ENCODE measurements at regions of chr22 and their contacts with region 1.

Region 1: DNA sequence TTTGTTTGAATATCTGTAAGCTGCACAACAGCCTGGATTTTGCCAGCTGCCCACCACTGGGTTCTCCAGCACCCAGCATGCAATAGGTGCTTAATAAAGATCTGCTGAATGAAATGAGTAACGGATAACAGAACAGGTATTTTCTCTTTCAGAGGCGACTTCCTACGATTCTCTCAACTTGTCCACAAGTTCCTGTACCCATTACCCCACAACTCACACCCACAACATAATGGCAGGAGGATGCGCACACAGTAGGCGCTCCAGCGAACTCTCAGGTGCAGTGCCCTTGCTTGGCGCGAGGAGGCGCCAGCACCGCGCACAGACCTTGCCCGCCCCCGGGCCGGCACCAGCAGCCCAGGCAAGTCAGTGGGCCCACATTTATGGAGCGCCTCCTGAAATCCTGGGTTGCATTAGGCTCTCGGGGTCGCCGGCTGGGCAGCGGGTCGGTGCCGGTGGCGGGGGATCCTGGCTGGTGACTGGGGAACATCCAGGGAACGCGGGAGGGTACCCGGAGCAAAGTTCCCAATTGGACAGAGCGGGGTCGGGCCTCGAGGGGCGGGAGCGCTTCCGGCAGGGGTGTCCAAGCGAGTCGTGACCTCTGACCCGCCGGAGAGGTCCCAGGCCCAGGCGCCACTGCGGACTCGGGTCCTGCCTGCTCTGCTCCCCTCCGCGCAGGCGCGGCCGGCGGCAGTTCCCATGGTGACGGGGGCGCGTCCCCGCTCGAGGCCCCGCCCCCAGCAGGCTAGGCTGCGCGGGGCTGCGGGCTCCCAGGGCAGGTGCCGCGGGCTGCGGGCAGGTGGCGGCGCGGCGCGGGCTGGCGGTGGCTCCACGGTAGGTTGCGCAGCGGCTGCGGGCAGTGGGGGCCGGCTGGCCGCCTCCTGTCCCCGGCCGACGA is at the start of gene KIAA1671:
- DNase-seq: peak; percentile 86
- ATAC-seq: peak; percentile 81
- H3K4me3 ChIP-seq: peak within 1 kb of the TSS; percentile 70 to 85 (median 85)
- H3K27ac ChIP-seq: peak within 1 kb of the TSS; percentile 90
- H3K4me1 ChIP-seq: peaks cover 41% of the 10 kb centered on the region
- H3K27me3 ChIP-seq: no peaks in the 10 kb centered on the region
- CTCF ChIP-seq: peak; percentile 99
- EP300 ChIP-seq: no peak
- POLR2A ChIP-seq: peak in 1 of 2 experiments; percentile 65; a peak in 2 of 4 replicates
- RAD21 ChIP-seq: peak; percentile 97
- total RNA-seq, gene KIAA1671: 12.0 and 13.5 TPM in 2 replicates

Region 2: DNA sequence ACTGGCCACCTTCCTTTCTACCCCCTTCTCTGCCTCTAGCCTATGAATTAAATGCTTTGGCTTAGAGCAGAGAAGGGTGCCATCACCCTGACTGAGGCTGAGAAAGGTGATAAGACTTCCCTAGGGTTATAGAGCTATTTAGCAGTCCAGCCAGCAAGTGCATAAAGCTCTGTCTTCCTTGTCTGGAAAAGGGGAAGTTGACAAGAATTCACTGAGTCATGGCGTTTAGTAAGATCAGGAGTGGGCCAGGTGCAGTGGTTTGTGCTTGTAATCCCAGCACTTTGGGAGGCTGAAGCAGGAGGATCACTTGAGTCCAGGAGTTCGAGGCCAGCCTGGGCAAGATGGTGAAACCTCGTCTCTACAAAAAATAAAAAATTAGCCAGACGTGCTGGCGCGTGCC is 68.8 kb before region 1 on chr22:
- CTCF ChIA-PET with region 1: no interaction called
- POLR2A ChIA-PET with region 1: no interaction called
- in situ Hi-C with region 1: no loop called
- intact Hi-C with region 1: no loop called
- DNase-seq: no peak
- ATAC-seq: no peak
- H3K4me3 ChIP-seq: no peak overlapping the region
- H3K27ac ChIP-seq: no peak overlapping the region
- H3K4me1 ChIP-seq: no peaks in the 10 kb centered on the region
- H3K27me3 ChIP-seq: peaks cover 0 to 5% of the 10 kb centered on the region in 2 experiments; a peak in 1 of 5 replicates
- CTCF ChIP-seq: no peak
- EP300 ChIP-seq: no peak
- POLR2A ChIP-seq: no peak
- RAD21 ChIP-seq: no peak

Region 3: DNA sequence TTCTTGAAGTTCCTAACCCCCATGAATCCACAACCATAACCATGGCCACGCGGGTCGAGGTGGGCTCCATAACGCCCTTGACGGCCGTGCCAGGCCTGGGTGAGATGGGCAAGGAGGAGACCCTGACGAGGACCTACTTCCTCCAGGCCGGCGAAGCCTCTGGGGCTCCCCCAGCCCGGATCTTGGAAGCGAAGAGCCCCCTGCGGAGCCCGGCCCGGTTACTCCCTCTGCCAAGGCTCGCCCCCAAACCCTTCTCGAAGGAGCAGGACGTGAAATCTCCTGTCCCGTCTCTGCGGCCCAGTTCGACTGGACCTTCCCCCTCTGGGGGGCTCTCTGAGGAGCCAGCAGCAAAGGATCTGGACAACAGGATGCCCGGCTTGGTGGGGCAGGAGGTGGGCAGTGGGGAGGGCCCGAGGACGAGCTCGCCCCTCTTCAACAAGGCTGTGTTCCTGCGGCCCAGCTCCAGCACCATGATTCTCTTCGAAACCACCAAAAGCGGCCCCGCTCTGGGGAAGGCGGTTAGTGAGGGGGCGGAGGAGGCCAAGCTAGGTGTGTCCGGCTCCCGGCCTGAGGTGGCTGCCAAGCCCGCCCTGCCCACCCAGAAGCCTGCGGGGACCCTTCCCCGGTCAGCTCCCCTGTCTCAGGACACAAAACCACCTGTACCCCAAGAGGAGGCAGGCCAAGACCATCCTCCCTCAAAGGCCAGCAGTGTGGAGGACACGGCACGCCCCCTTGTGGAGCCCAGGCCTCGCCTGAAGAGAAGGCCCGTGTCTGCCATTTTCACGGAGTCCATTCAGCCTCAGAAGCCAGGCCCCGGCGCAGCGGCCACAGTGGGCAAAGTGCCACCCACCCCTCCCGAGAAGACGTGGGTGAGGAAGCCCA is 76.0 kb after region 1 on chr22:
- CTCF ChIA-PET with region 1: interaction called, 6 read pairs
- POLR2A ChIA-PET with region 1: no interaction called
- in situ Hi-C with region 1: loop called (anchors 5 kb)
- intact Hi-C with region 1: loop called (anchors 5 kb)
- DNase-seq: no peak
- ATAC-seq: peak; percentile 81
- H3K4me3 ChIP-seq: no peak overlapping the region
- H3K27ac ChIP-seq: no peak overlapping the region
- H3K4me1 ChIP-seq: peaks cover 28% of the 10 kb centered on the region
- H3K27me3 ChIP-seq: no peaks in the 10 kb centered on the region
- CTCF ChIP-seq: peak; percentile 76
- EP300 ChIP-seq: no peak
- POLR2A ChIP-seq: no peak
- RAD21 ChIP-seq: peak; percentile 55; the same call in 1 of the 2 replicates

Region 4: DNA sequence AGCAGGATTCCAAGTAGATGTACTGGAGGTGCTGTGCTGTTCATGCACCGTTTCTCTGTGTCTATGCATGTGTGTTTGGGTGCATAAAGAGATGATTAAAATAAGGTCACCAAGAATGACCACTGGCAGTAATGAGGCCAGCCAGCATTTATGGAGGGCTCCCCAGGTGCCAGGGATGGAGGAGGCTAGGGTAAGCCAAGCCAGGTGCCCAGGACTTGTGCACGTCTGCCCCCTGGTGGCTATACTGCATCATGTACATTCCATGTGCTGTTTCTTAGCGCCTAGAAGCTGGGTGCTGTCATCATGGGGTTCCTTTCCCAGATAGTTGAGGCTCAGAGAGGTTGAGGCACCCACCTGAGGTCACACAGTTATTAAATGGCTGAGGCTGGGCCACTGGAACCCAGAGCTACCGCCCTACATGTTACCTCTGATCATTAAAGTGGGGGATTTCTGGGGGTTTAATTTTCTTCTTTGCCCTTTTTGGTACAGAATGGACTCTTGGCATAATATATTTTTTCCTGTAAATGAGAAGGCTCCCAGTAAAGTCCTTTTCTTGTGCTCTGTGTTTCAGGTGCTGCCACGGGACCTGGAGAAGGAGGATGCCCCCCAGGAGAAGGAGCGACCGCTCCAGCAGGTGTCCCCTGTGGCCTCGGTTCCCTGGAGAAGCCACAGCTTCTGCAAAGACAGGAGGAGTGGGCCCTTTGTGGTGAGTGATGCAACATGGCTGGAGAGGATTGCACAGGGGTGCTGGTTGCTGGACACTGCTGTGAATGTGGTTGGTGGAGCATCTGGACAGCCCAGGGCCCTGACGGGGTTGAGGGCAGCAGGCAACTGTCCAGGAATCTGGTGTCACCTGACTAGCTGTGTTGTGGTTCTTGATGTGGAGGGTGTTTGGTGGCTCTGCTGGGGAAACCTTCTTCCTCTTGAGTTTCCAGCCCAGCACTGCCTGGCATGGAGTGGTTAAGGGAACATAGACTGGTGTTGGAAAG is 96.8 kb after region 1 on chr22:
- CTCF ChIA-PET with region 1: interaction called, 20 read pairs
- POLR2A ChIA-PET with region 1: no interaction called
- in situ Hi-C with region 1: loop called (anchors 10 kb)
- intact Hi-C with region 1: loop called (anchors 1 kb)
- DNase-seq: peak; percentile 62
- ATAC-seq: peak; percentile 89
- H3K4me3 ChIP-seq: no peak overlapping the region
- H3K27ac ChIP-seq: no peak overlapping the region
- H3K4me1 ChIP-seq: peaks cover 27% of the 10 kb centered on the region
- H3K27me3 ChIP-seq: no peaks in the 10 kb centered on the region
- CTCF ChIP-seq: peak; percentile 92
- EP300 ChIP-seq: no peak
- POLR2A ChIP-seq: no peak
- RAD21 ChIP-seq: peak; percentile 84

Region 5: GRCh38 chr22:25057013-25057881 is 105.1 kb after region 1 on chr22:
- CTCF ChIA-PET with region 1: interaction called, 6 read pairs
- POLR2A ChIA-PET with region 1: no interaction called
- in situ Hi-C with region 1: loop called (anchors 10 kb)
- intact Hi-C with region 1: loop called (anchors 1 kb)
- DNase-seq: peak; percentile 44
- ATAC-seq: peak; percentile 95
- H3K4me3 ChIP-seq: no peak overlapping the region
- H3K27ac ChIP-seq: no peak overlapping the region
- H3K4me1 ChIP-seq: peaks cover 27% of the 10 kb centered on the region
- H3K27me3 ChIP-seq: no peaks in the 10 kb centered on the region
- CTCF ChIP-seq: peak; percentile 80
- EP300 ChIP-seq: no peak
- POLR2A ChIP-seq: no peak
- RAD21 ChIP-seq: peak; percentile 64